ENCODE measurements at regions of chr11 and their contacts with region 1.

Region 1: GRCh38 chr11:47143322-47143721 is 33.4 kb downstream of the ARFGAP2 start:
- DNase-seq: peak; percentile 77 to 83
- H3K4me3 ChIP-seq: no peak overlapping the region
- H3K27ac ChIP-seq: peak overlapping the region in 1 of 2 donors; percentile 48
- H3K4me1 ChIP-seq: peaks cover 0 to 8% of the 10 kb centered on the region in 2 donors
- H3K27me3 ChIP-seq: no peaks in the 10 kb centered on the region
- CTCF ChIP-seq: no peak
- POLR2A ChIP-seq: no peak

Region 2: DNA sequence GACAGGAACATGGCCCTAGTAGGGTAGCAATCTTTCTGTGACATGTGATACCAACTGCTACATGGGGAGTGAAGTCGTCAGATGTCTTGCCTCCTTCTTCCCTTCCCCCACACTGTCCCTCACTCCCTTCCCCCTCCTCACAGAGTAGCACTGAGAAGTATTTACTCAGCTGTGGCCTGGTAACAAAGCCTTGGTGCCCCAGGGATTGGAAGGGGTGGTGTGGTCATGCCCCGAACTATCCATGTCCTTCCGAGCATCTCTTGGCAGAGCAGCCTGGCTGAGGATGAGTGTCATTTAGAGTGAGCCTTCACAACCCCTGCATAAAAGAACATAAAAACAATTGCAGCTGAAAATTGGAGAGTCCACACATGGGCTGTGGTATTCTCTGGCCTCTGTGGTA is 12.8 kb before region 1 on chr11:
- intact Hi-C with region 1: loop called (anchors 1 kb)
- DNase-seq: no peak
- H3K4me3 ChIP-seq: no peak overlapping the region
- H3K27ac ChIP-seq: no peak overlapping the region
- H3K4me1 ChIP-seq: no peaks in the 10 kb centered on the region
- H3K27me3 ChIP-seq: no peaks in the 10 kb centered on the region
- CTCF ChIP-seq: no peak
- POLR2A ChIP-seq: no peak

Measured in breast epithelium (tissue), 4 donors.